Endothelial cell of umbilical vein (primary cell): ENCODE measurements at regions of chr1 and their contacts with region 1.

Region 1: DNA sequence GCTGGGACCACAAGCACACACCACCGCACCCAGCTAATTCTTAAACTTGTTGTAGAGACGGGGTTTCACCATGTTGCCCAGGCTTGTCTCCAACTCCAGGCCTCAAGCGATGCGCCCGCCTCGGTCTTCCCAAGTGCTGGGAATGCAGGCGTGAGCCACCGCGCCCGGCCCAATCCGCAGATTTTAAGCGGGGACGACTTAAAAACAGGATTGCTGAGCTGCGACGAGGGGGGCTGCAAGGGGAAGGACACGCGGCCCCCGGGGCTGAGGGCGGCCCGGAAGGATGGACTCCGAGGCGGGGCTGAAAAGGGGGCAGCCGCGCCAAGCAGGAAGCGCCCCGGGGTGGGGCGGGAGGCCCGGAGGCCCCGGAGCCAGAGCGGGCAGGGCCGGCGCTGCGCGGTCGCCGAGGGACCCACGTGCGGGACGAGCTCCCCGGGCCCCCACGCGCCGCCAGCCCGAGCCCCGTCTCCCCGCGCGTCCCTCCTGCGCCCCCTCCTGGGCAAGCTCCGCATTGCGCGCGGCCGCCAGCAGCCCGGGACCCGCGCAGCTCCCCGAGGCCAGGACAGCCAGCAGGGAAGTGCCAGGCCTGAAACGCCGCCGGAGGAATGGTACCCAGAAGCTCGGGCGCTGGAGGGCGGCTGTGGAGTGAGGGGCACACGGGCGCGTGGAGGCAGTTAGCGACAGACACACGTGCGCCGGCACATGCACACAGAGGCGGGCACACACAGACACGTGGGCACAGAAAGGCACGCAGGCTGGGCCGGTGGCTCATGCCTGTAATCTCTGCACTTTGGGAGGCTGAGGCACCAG is 5.5 kb upstream of the PRKCZ start:
- DNase-seq: peak; percentile 45
- H3K4me3 ChIP-seq: no peak overlapping the region
- H3K27ac ChIP-seq: no peak overlapping the region
- H3K4me1 ChIP-seq: no peaks in the 10 kb centered on the region
- H3K27me3 ChIP-seq: peaks cover 8 to 13% of the 10 kb centered on the region in 2 experiments
- CTCF ChIP-seq: peak; percentile 73 to 76
- POLR2A ChIP-seq: no peak

Region 2: GRCh38 chr1:1943834-1944570 is 100.7 kb before region 1 on chr1:
- CTCF ChIA-PET with region 1: interaction called, 44 read pairs
- POLR2A ChIA-PET with region 1: no interaction called
- dilution Hi-C with region 1: no loop called
- intact Hi-C with region 1: loop called (anchors 1 kb)
- DNase-seq: peak; percentile 41
- H3K4me3 ChIP-seq: no peak overlapping the region
- H3K27ac ChIP-seq: no peak overlapping the region
- H3K4me1 ChIP-seq: no peaks in the 10 kb centered on the region
- H3K27me3 ChIP-seq: no peaks in the 10 kb centered on the region
- CTCF ChIP-seq: peak; percentile 74 to 85
- POLR2A ChIP-seq: no peak

Region 3: DNA sequence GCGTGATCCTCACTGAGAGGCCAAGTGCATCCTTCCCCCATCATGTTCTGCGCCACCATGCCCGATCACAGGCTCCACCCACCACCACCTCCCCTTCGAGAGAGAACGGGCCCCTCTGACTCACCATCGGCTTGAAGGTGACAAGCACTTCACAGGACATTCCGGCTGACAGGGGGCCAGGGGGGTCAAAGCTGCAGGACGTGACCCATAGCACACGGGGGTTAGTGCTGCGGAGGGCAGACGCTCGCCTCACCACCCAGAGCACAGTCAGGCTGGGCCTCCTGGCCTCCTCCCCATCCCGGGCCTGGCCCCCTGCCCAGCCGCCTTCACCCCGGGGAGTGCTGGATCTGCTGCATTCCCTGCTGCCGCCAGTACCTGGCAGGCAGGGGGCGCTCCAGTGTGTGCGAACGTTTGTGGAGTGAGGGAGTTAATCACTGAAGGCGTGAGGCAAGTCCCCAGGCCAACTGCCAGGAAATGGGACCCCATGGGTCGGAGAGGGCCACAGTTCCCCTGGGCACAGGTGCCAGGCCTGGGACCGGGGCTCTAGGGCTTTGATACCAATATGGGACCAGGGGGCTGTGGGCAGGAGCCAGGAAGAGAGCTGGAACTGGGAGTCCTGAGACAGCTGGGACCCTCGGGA is 84.8 kb before region 1 on chr1:
- CTCF ChIA-PET with region 1: interaction called, 108 read pairs
- POLR2A ChIA-PET with region 1: no interaction called
- dilution Hi-C with region 1: no loop called
- intact Hi-C with region 1: loop called (anchors 1 kb)
- DNase-seq: peak; percentile 55
- H3K4me3 ChIP-seq: no peak overlapping the region
- H3K27ac ChIP-seq: no peak overlapping the region
- H3K4me1 ChIP-seq: no peaks in the 10 kb centered on the region
- H3K27me3 ChIP-seq: peaks cover 3% of the 10 kb centered on the region in 2 experiments
- CTCF ChIP-seq: peak; percentile 69 to 81
- POLR2A ChIP-seq: no peak

Region 4: GRCh38 chr1:2003278-2004131 is 41.2 kb before region 1 on chr1 and contains the start of gene CFAP74:
- CTCF ChIA-PET with region 1: interaction called, 15 read pairs
- POLR2A ChIA-PET with region 1: no interaction called
- dilution Hi-C with region 1: no loop called
- intact Hi-C with region 1: no loop called
- DNase-seq: no peak
- H3K4me3 ChIP-seq: no peak within 1 kb of the TSS
- H3K27ac ChIP-seq: no peak within 1 kb of the TSS
- H3K4me1 ChIP-seq: no peaks in the 10 kb centered on the region
- H3K27me3 ChIP-seq: peaks cover 5 to 17% of the 10 kb centered on the region in 2 experiments
- CTCF ChIP-seq: no peak
- POLR2A ChIP-seq: no peak
- total RNA-seq, gene CFAP74: not detected in 2 replicates

Region 5: DNA sequence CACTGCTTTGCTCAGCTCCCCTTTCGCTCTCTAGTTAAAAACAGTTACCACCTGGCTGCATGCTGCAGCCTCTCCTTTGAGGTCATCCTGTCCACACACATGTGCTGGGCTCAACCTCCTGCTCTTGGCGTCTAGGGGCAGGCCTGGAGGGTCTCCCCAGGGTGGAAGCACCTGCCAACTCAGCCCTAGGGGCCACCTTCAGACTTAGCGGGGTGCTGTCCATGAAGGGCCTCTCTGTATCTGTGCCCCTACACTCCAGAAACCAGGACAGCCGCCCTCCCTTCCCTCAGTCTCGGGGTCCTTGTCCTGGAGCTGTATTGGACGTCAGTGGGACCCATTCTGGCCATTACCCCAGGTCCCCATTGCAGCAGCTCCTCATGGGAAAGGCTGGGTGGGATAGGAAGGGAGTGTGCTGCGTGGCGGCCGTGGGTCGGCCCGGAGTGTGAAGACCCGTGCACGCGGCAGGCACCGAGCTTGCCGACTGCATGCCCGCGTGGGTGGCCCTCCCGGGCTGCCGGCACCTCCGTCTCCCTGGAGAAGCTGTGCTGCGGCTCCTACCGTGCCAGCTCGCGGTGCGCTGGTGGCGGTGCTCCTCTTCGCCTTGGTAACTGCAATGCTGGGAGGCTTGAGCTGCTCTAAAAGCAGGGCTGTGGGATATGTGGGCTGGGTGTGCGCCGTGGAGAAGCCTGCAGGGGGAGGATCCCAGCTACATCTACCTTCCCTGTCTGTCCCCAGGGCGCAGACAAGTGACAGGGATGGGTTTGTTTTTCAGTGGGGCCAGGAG is 23.4 kb before region 1 on chr1:
- CTCF ChIA-PET with region 1: interaction called, 10 read pairs
- POLR2A ChIA-PET with region 1: no interaction called
- dilution Hi-C with region 1: no loop called
- intact Hi-C with region 1: no loop called
- DNase-seq: no peak
- H3K4me3 ChIP-seq: no peak overlapping the region
- H3K27ac ChIP-seq: no peak overlapping the region
- H3K4me1 ChIP-seq: no peaks in the 10 kb centered on the region
- H3K27me3 ChIP-seq: peaks cover 24 to 27% of the 10 kb centered on the region in 2 experiments
- CTCF ChIP-seq: no peak
- POLR2A ChIP-seq: no peak

Region 6: GRCh38 chr1:2031546-2032540 is 12.9 kb before region 1 on chr1:
- CTCF ChIA-PET with region 1: interaction called, 19 read pairs
- POLR2A ChIA-PET with region 1: no interaction called
- dilution Hi-C with region 1: no loop called
- intact Hi-C with region 1: no loop called
- DNase-seq: no peak
- H3K4me3 ChIP-seq: no peak overlapping the region
- H3K27ac ChIP-seq: no peak overlapping the region
- H3K4me1 ChIP-seq: no peaks in the 10 kb centered on the region
- H3K27me3 ChIP-seq: no peaks in the 10 kb centered on the region
- CTCF ChIP-seq: no peak
- POLR2A ChIP-seq: no peak

Region 7: DNA sequence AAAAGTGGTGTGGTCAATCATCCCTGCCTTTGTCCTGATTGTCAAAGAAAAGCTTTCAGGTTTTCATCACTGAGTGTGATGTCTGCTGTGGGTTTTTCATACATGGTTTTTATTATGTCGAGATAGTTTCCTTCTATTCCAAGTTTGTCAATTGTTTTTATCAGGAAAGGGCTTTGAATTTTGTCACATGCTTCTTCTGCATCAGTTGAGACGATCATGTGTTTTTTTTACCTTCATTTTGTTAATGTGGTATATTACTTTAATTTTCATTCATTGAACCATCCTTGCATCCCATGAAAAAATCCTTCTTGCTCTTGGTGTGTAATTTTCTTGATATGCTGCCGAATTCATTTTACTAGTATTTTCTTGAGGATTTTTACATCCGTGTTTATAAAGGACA is 21.0 kb after region 1 on chr1:
- CTCF ChIA-PET with region 1: no interaction called
- POLR2A ChIA-PET with region 1: no interaction called
- dilution Hi-C with region 1: no loop called
- intact Hi-C with region 1: no loop called
- DNase-seq: no peak
- H3K4me3 ChIP-seq: no peak overlapping the region
- H3K27ac ChIP-seq: no peak overlapping the region
- H3K4me1 ChIP-seq: no peaks in the 10 kb centered on the region
- H3K27me3 ChIP-seq: no peaks in the 10 kb centered on the region
- CTCF ChIP-seq: no peak
- POLR2A ChIP-seq: no peak

Region 8: DNA sequence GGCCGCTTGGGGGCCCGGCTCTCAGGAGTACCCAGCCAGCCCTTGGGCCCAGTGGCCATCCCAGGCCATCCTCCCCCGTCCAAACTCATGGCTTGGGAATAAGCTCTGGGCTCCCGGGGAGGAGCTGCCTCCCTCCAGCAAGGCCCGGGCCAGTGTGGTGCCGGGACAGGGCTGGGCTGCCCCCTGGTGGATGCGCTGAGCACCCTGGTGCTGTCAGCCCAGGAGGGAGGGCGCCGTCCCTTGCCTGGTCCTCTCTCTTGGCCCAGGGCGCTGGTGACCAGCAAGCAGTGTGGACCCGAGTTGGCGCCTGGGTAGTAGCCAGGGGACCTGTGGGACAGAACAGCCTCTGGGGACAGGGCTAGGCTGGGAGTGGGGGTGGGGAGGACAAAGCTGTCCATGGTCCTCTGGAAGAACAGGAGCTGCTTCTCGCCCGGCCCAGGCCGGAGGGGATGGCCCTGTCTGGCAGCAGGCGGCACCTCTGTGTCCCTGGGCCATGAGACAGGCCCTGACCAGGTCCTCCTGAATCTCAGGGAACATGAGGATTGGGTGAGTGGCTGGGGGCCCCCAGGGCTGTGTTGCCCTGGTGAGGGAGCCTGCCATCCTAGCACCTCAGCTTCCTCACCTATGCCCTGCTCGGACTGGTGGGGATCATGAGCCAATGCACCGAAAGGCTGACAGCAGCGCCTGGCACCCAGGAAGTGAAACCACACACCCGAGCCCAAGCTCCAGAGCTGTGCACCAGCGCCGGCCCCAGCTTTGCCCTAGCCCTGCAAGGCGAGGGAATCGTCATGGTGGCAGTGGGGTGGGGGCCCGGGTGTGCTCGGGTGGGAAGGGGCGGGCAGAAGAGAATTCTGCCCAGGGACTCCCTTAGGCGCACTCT is 337.3 kb after region 1 on chr1:
- CTCF ChIA-PET with region 1: no interaction called
- POLR2A ChIA-PET with region 1: no interaction called
- dilution Hi-C with region 1: no loop called
- intact Hi-C with region 1: no loop called
- DNase-seq: peak; percentile 65
- H3K4me3 ChIP-seq: no peak overlapping the region
- H3K27ac ChIP-seq: no peak overlapping the region
- H3K4me1 ChIP-seq: no peaks in the 10 kb centered on the region
- H3K27me3 ChIP-seq: no peaks in the 10 kb centered on the region
- CTCF ChIP-seq: peak; percentile 95 to 97
- POLR2A ChIP-seq: no peak

Region 9: DNA sequence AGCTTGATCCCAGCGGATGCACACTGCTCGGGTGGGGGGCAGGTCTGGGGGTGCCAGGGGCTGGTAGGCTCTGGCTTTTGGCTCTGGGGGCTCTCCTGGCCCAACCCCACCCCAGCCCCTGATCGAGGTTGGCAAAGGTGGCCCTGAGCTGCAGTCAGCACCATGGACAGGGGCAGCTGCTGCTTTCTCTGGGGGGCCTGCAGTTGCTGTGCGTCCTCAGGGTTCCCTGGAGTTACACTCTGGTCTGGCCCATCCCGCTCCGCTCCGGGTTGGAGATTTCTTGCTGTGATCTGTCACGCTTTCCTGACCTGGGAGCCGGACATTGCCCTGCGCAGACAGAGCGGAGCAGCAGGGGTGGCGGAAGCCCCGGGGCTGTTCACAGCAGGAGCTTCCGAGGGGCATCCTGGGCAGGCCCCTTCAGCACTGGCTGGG is 423.3 kb after region 1 on chr1:
- CTCF ChIA-PET with region 1: no interaction called
- POLR2A ChIA-PET with region 1: no interaction called
- dilution Hi-C with region 1: no loop called
- intact Hi-C with region 1: no loop called
- DNase-seq: peak; percentile 5
- H3K4me3 ChIP-seq: no peak overlapping the region
- H3K27ac ChIP-seq: no peak overlapping the region
- H3K4me1 ChIP-seq: no peaks in the 10 kb centered on the region
- H3K27me3 ChIP-seq: no peaks in the 10 kb centered on the region
- CTCF ChIP-seq: no peak
- POLR2A ChIP-seq: no peak